ENCODE measurements at regions of chrX and their contacts with region 1.

Region 1: DNA sequence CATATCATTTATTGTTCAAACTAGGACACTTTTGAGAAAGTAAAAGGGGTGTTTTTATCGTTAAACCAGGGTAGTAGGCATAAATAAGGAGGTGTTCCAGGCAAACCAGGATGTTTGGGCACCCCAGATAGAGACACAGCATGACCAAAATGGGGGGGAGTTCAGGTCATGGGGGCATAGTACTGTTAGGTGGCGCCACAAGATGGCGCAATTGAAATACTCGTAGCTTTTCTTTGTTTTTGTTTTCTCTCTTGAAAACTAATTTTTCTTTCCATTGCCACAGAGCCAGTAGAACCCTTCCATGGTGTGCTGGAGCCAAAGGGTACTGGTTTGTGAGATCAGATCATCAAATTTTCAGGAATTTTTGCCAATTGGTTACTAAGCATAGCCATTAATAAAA is 283.4 kb downstream of the BCOR start:
- DNase-seq: peak; percentile 13
- H3K4me3 Mint-ChIP-seq: no peak overlapping the region
- H3K27ac Mint-ChIP-seq: no peak overlapping the region
- H3K4me1 Mint-ChIP-seq: peaks cover 11% of the 10 kb centered on the region
- H3K27me3 Mint-ChIP-seq: peaks cover 22% of the 10 kb centered on the region
- CTCF ChIP-seq: peak; percentile 20

Region 2: GRCh38 chrX:39730662-39731397 is 83.6 kb before region 1 on chrX:
- CTCF ChIA-PET with region 1: interaction called, 8 read pairs
- intact Hi-C with region 1: loop called (anchors 5 kb)
- DNase-seq: peak; percentile 68
- H3K4me3 Mint-ChIP-seq: no peak overlapping the region
- H3K27ac Mint-ChIP-seq: no peak overlapping the region
- H3K4me1 Mint-ChIP-seq: peaks cover 24% of the 10 kb centered on the region
- H3K27me3 Mint-ChIP-seq: no peaks in the 10 kb centered on the region
- CTCF ChIP-seq: peak; percentile 31

Region 3: DNA sequence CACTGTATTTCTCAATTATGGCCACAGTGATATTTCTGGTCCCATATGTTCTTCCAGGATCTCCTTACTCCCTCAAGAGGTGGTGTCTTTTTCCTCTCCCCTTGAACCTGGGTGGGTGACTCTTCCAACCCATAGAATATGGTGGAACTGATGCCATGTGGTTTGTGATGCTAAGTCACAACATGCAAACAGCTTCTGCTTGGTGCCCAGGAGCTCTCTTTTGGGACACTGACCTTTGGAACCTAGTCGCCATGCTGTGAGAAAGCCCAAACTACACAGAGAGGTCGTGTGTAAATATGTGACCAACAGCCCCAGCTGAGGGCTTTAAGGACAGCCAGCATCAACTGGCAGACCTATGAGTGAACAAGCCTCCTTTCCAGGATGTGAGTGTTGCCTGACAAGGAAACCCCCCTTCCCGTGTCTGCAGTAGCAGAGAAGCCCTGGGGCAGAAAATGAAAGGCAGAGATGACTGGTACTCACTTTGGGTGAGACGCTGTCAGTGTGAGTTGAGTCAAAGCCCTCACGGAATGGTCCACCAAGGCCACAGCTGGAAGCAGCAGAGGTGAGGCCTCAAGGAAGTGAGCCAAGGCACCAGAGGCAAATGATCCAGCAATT is 59.9 kb after region 1 on chrX:
- CTCF ChIA-PET with region 1: no interaction called
- intact Hi-C with region 1: no loop called
- DNase-seq: no peak
- H3K4me3 Mint-ChIP-seq: no peak overlapping the region
- H3K27ac Mint-ChIP-seq: no peak overlapping the region
- H3K4me1 Mint-ChIP-seq: peaks cover 7% of the 10 kb centered on the region
- H3K27me3 Mint-ChIP-seq: peaks cover 41% of the 10 kb centered on the region
- CTCF ChIP-seq: no peak

Region 4: GRCh38 chrX:39907964-39908616 is 93.7 kb after region 1 on chrX:
- CTCF ChIA-PET with region 1: no interaction called
- intact Hi-C with region 1: loop called (anchors 10 kb)
- DNase-seq: peak; percentile 71
- H3K4me3 Mint-ChIP-seq: peak overlapping the region; percentile 39
- H3K27ac Mint-ChIP-seq: peak overlapping the region; percentile 11
- H3K4me1 Mint-ChIP-seq: peaks cover 31% of the 10 kb centered on the region
- H3K27me3 Mint-ChIP-seq: no peaks in the 10 kb centered on the region
- CTCF ChIP-seq: no peak

Region 5: GRCh38 chrX:40097497-40098263 is 283.3 kb after region 1 on chrX and contains the start of gene BCOR:
- CTCF ChIA-PET with region 1: interaction called, 3 read pairs
- intact Hi-C with region 1: loop called (anchors 10 kb)
- DNase-seq: peak; percentile 71
- H3K4me3 Mint-ChIP-seq: peak within 1 kb of the TSS; percentile 83
- H3K27ac Mint-ChIP-seq: peak within 1 kb of the TSS; percentile 42
- H3K4me1 Mint-ChIP-seq: peaks cover 25% of the 10 kb centered on the region
- H3K27me3 Mint-ChIP-seq: peaks cover 18% of the 10 kb centered on the region
- CTCF ChIP-seq: no peak
- total RNA-seq, gene BCOR: 20.6 and 21.1 TPM in 2 replicates

Region 6: DNA sequence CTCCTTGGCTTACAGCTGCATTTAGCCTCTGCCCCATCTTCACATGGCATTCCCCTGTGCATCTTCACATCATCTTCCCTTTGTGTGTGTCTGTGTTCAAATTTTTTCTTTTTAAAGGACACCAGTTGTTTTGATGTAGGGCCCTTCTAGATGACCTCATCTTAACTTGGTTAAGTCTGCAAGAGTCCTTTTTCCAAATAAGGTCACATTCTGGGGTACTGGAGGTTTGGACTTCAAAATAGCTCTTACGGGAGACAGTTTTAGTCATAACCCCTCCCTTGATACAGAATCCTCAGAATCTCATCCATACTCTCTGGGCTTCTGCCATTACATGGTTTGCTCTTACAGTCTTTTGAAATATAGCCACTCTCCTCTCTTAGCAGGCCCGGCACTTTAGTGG is 534.9 kb after region 1 on chrX:
- CTCF ChIA-PET with region 1: no interaction called
- intact Hi-C with region 1: no loop called
- DNase-seq: no peak
- H3K4me3 Mint-ChIP-seq: no peak overlapping the region
- H3K27ac Mint-ChIP-seq: no peak overlapping the region
- H3K4me1 Mint-ChIP-seq: no peaks in the 10 kb centered on the region
- H3K27me3 Mint-ChIP-seq: peaks cover 23% of the 10 kb centered on the region
- CTCF ChIP-seq: no peak

Measured in Calu3 (cell line).